ENCODE measurements at regions of chr1 and their contacts with region 1.

Region 1: GRCh38 chr1:76154206-76154956 is 79.8 kb downstream of the ST6GALNAC3 start:
- DNase-seq: peak; percentile 81
- H3K4me3 Mint-ChIP-seq: peak overlapping the region; percentile 71
- H3K27ac Mint-ChIP-seq: no peak overlapping the region
- H3K4me1 Mint-ChIP-seq: peaks cover 7% of the 10 kb centered on the region
- H3K27me3 Mint-ChIP-seq: no peaks in the 10 kb centered on the region
- CTCF ChIP-seq: peak; percentile 93

Region 2: GRCh38 chr1:75722966-75723365 is 431.4 kb before region 1 on chr1:
- CTCF ChIA-PET with region 1: no interaction called
- POLR2A ChIA-PET with region 1: no interaction called
- intact Hi-C with region 1: no loop called
- DNase-seq: no peak
- H3K4me3 Mint-ChIP-seq: peak overlapping the region; percentile 99
- H3K27ac Mint-ChIP-seq: peak overlapping the region; percentile 31
- H3K4me1 Mint-ChIP-seq: peaks cover 26% of the 10 kb centered on the region
- H3K27me3 Mint-ChIP-seq: no peaks in the 10 kb centered on the region
- CTCF ChIP-seq: no peak

Region 3: DNA sequence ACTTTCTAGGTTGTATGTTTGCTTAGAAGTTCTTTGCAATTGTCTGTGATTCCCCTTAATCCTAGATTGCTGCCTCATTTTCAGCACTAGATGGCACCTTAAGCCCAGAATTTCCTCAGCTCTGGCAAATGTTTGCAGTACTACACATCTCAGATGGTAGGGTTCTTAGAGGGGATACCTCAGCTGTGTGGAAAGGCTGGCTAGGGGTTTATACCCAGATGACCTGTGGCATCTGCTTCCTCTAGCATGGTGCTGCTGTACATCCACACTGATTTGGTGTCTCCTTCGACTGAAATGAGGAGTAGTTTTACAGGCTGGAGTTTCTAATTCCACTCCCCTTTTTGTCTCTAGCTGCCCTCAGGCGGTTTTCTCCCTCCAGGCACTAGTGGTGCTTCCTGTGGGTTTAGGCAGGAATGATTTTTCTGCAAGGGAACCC is 245.6 kb before region 1 on chr1:
- CTCF ChIA-PET with region 1: interaction called, 10 read pairs
- POLR2A ChIA-PET with region 1: no interaction called
- intact Hi-C with region 1: loop called (anchors 1 kb)
- DNase-seq: peak; percentile 72
- H3K4me3 Mint-ChIP-seq: no peak overlapping the region
- H3K27ac Mint-ChIP-seq: no peak overlapping the region
- H3K4me1 Mint-ChIP-seq: no peaks in the 10 kb centered on the region
- H3K27me3 Mint-ChIP-seq: peaks cover 33% of the 10 kb centered on the region
- CTCF ChIP-seq: peak; percentile 63

Region 4: GRCh38 chr1:76142771-76143540 is 11.4 kb before region 1 on chr1:
- CTCF ChIA-PET with region 1: interaction called, 18 read pairs
- POLR2A ChIA-PET with region 1: no interaction called
- intact Hi-C with region 1: no loop called
- DNase-seq: no peak
- H3K4me3 Mint-ChIP-seq: no peak overlapping the region
- H3K27ac Mint-ChIP-seq: no peak overlapping the region
- H3K4me1 Mint-ChIP-seq: peaks cover under 1% of the 10 kb centered on the region
- H3K27me3 Mint-ChIP-seq: peaks cover 21% of the 10 kb centered on the region
- CTCF ChIP-seq: no peak

Region 5: DNA sequence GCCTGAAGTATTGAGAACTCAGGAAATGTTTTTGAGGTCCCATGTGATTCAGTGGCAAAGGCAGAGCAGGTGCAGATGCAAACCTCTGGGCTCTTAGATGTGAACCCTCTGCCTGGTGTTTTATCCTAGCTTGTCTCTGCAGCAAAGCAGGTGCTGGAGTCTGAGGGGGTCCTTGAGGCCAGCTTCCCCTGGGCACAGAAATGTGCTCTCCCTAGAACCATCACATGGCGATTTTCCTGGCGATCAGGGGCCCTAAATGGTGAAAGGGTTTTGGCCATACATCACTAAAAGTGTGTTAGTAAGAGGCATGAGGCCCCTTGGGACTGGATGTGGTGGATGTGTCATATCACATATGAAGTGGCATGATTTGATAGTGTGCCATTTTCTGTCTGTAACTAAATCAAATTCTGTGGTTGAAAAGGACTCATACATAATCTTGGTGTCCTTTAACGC is 65.0 kb after region 1 on chr1:
- CTCF ChIA-PET with region 1: no interaction called
- POLR2A ChIA-PET with region 1: no interaction called
- intact Hi-C with region 1: no loop called
- DNase-seq: peak; percentile 1
- H3K4me3 Mint-ChIP-seq: no peak overlapping the region
- H3K27ac Mint-ChIP-seq: no peak overlapping the region
- H3K4me1 Mint-ChIP-seq: no peaks in the 10 kb centered on the region
- H3K27me3 Mint-ChIP-seq: peaks cover 16% of the 10 kb centered on the region
- CTCF ChIP-seq: no peak

Region 6: DNA sequence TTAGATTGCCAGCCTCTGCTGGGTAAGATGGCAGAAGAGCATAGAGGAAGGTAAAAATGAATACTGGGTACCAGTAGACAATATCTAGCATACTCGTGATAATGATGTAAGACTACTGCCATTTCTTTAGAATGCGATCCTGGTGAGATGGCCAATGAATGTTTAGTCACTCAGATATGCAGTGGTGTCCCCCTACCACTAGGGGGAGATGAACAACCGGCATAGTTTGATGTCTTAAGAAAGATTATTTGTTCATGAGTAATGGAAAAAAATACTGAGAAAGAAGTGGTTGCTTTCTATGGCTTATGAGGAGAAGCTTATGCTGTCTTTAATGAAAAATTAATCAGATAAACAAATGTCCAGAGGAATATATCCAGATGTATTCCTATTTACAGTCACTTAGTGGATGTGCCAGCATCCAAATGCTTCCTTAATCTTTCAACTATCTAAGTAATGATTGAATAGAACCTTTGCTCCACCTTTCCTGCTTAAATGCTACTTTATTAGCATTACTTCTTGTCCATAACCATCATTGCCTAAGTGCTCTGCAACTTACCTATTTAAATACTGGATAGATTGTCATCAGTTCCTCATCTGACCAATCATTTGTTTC is 176.7 kb after region 1 on chr1:
- CTCF ChIA-PET with region 1: interaction called, 11 read pairs
- POLR2A ChIA-PET with region 1: no interaction called
- intact Hi-C with region 1: loop called (anchors 1 kb)
- DNase-seq: peak; percentile 78
- H3K4me3 Mint-ChIP-seq: no peak overlapping the region
- H3K27ac Mint-ChIP-seq: no peak overlapping the region
- H3K4me1 Mint-ChIP-seq: no peaks in the 10 kb centered on the region
- H3K27me3 Mint-ChIP-seq: no peaks in the 10 kb centered on the region
- CTCF ChIP-seq: peak; percentile 90

Region 7: DNA sequence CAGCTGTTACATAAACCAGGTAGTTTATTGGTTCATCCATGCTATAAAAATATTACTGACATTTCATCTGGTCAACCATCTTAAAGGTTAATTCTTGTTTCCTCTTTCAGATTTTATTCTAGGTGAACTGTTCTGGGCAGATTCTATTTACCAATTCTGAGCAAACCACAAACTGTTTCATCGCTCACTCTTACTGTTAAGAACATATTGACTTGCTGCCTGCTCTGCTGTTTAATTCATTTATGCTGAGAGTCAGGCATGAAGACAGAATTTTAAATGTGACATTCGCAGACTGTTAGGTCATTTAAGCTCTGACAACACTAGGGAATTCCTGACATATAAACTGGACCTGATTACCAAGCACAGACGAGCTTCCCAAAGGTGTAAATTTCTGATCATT is 966.6 kb after region 1 on chr1:
- CTCF ChIA-PET with region 1: interaction called, 17 read pairs
- POLR2A ChIA-PET with region 1: interaction called, 3 read pairs
- intact Hi-C with region 1: loop called (anchors 1 kb)
- DNase-seq: no peak
- H3K4me3 Mint-ChIP-seq: no peak overlapping the region
- H3K27ac Mint-ChIP-seq: no peak overlapping the region
- H3K4me1 Mint-ChIP-seq: peaks cover 2% of the 10 kb centered on the region
- H3K27me3 Mint-ChIP-seq: no peaks in the 10 kb centered on the region
- CTCF ChIP-seq: no peak

Region 8: GRCh38 chr1:77143529-77144121 is 989.2 kb after region 1 on chr1:
- CTCF ChIA-PET with region 1: interaction called, 37 read pairs
- POLR2A ChIA-PET with region 1: interaction called, 3 read pairs
- intact Hi-C with region 1: loop called (anchors 1 kb)
- DNase-seq: peak; percentile 8
- H3K4me3 Mint-ChIP-seq: no peak overlapping the region
- H3K27ac Mint-ChIP-seq: no peak overlapping the region
- H3K4me1 Mint-ChIP-seq: no peaks in the 10 kb centered on the region
- H3K27me3 Mint-ChIP-seq: no peaks in the 10 kb centered on the region
- CTCF ChIP-seq: peak; percentile 36

Region 9: GRCh38 chr1:77683160-77684148 is 1529.1 kb after region 1 on chr1:
- CTCF ChIA-PET with region 1: no interaction called
- POLR2A ChIA-PET with region 1: no interaction called
- intact Hi-C with region 1: loop called (anchors 2 kb)
- DNase-seq: peak; percentile 89
- H3K4me3 Mint-ChIP-seq: peak overlapping the region; percentile 89
- H3K27ac Mint-ChIP-seq: peak overlapping the region; percentile 99
- H3K4me1 Mint-ChIP-seq: peaks cover 28% of the 10 kb centered on the region
- H3K27me3 Mint-ChIP-seq: no peaks in the 10 kb centered on the region
- CTCF ChIP-seq: peak; percentile 94